A549 (cell line): ENCODE measurements at regions of chr1 and their contacts with region 1.

Region 1: GRCh38 chr1:214328770-214329469 is 48.0 kb downstream of the SMYD2 start:
- DNase-seq: peak; percentile 73 to 74
- ATAC-seq: peak; percentile 81 to 89
- H3K4me3 ChIP-seq: no peak overlapping the region
- H3K27ac ChIP-seq: no peak overlapping the region
- H3K4me1 ChIP-seq: no peaks in the 10 kb centered on the region
- CTCF ChIP-seq: peak; percentile 93
- EP300 ChIP-seq: no peak
- POLR2A ChIP-seq: no peak
- RAD21 ChIP-seq: peak; percentile 94 to 97

Region 2: DNA sequence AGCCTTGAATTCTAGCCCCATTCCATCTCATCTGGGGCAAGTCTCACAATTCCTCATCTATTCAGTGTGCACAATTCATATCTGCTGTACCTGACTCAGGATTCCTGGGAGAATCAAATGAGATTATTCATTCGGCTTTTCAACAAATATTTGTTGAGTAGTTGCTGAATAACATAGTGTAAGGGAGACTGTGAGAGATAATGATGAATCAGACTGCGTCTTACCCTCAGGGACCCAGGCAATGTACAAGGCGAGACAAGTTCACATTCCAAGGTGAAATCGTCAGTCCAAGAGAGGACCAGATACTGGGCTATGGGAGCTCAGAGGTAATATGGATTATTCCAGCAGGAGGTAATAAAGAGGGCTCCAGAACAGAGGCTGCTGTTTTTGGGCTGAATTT is 115.8 kb before region 1 on chr1:
- CTCF ChIA-PET with region 1: interaction called, 324 read pairs
- POLR2A ChIA-PET with region 1: interaction called, 4 read pairs
- DNase-seq: peak; percentile 52 to 84
- ATAC-seq: peak; percentile 94 to 95
- H3K4me3 ChIP-seq: no peak overlapping the region
- H3K27ac ChIP-seq: peak overlapping the region; percentile 74
- H3K4me1 ChIP-seq: peaks cover 52% of the 10 kb centered on the region
- CTCF ChIP-seq: no peak
- EP300 ChIP-seq: peak in 1 of 2 experiments; percentile 36; a peak in 1 of 5 replicates
- POLR2A ChIP-seq: no peak
- RAD21 ChIP-seq: no peak

Region 3: DNA sequence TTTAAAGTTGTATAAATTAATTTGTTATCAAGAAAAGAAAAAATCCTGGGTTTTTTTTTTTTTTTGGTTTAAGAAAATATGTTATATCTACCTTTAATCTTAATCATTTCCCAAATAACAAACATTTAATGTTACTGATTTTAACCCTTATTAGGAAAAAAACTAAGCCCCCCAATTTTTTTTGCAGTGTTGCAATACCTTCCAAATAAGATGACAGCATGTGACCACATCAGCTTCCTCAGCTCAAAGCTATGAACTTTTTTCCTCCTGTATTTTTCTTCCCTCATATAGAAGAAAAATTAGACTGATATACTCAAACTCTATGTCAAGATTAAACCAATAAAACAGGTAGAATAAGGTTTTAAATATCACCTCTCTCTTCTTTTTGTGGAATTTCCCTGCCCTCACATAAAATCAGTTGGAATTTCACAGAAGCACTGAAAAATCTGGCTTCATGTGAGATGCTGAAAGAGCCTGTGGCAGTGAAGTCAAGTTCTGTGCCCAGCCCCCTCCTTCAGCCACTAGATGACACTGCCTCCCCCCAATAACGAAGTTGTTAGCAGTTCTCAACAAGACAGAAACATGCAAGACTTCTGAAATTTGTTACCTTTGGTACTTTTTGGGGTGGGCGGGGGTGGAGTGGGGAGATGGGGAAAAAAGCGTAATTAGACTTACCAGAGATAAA is 57.6 kb before region 1 on chr1:
- CTCF ChIA-PET with region 1: interaction called, 43 read pairs
- POLR2A ChIA-PET with region 1: no interaction called
- DNase-seq: no peak
- ATAC-seq: no peak
- H3K4me3 ChIP-seq: no peak overlapping the region
- H3K27ac ChIP-seq: no peak overlapping the region
- H3K4me1 ChIP-seq: no peaks in the 10 kb centered on the region
- CTCF ChIP-seq: no peak
- EP300 ChIP-seq: no peak
- POLR2A ChIP-seq: no peak
- RAD21 ChIP-seq: no peak

Region 4: GRCh38 chr1:214310777-214311690 is 17.9 kb before region 1 on chr1:
- CTCF ChIA-PET with region 1: interaction called, 98 read pairs
- POLR2A ChIA-PET with region 1: no interaction called
- DNase-seq: no peak
- ATAC-seq: no peak
- H3K4me3 ChIP-seq: no peak overlapping the region
- H3K27ac ChIP-seq: no peak overlapping the region
- H3K4me1 ChIP-seq: no peaks in the 10 kb centered on the region; the same call in 2 of the 3 replicates
- CTCF ChIP-seq: no peak
- EP300 ChIP-seq: no peak
- POLR2A ChIP-seq: no peak
- RAD21 ChIP-seq: no peak

Region 5: DNA sequence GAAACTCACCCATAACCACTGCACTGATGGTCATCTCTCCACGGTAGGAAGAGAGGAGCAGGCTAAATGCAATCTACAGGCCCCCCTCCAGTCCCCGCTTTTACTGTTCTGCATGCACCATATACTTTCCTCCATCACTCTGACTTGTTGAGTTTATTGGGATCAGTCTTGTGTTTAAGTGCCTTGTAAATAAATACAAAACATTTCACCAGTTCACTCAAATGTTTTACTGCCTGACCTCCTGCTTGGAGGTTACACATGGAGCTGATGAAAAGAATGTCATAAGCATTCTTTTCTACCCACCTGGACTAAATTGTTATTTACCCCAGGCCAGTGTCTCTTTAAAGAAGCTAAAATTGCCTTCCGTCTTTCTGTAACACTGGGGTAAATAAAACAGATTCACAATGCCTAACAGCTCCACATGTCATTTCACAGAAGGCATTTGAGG is 191.7 kb after region 1 on chr1:
- CTCF ChIA-PET with region 1: interaction called, 12 read pairs
- POLR2A ChIA-PET with region 1: no interaction called
- DNase-seq: no peak
- ATAC-seq: no peak
- H3K4me3 ChIP-seq: no peak overlapping the region
- H3K27ac ChIP-seq: no peak overlapping the region
- H3K4me1 ChIP-seq: peaks cover 37% of the 10 kb centered on the region
- CTCF ChIP-seq: no peak
- EP300 ChIP-seq: no peak
- POLR2A ChIP-seq: no peak
- RAD21 ChIP-seq: no peak

Region 6: GRCh38 chr1:214632091-214632490 is 303.2 kb after region 1 on chr1:
- CTCF ChIA-PET with region 1: interaction called, 73 read pairs
- POLR2A ChIA-PET with region 1: no interaction called
- DNase-seq: no peak
- ATAC-seq: no peak
- H3K4me3 ChIP-seq: no peak overlapping the region
- H3K27ac ChIP-seq: no peak overlapping the region
- H3K4me1 ChIP-seq: no peaks in the 10 kb centered on the region
- CTCF ChIP-seq: no peak
- EP300 ChIP-seq: no peak
- POLR2A ChIP-seq: no peak
- RAD21 ChIP-seq: no peak